ENCODE measurements at regions of chr6 and their contacts with region 1.

Region 1: GRCh38 chr6:52598123-52598823 is 21.4 kb upstream of the TRAM2 start:
- H3K4me3 ChIP-seq: no peak overlapping the region
- H3K27ac ChIP-seq: no peak overlapping the region
- H3K4me1 ChIP-seq: peaks cover 4% of the 10 kb centered on the region; the same call in 1 of the 2 replicates
- CTCF ChIP-seq: peak; percentile 86

Region 2: GRCh38 chr6:52419809-52420670 is 178.2 kb before region 1 on chr6 and contains the start of gene EFHC1:
- CTCF ChIA-PET with region 1: interaction called, 87 read pairs
- POLR2A ChIA-PET with region 1: interaction called, 10 read pairs
- H3K4me3 ChIP-seq: peak within 1 kb of the TSS; percentile 66
- H3K27ac ChIP-seq: peak within 1 kb of the TSS; percentile 56; the same call in 1 of the 2 replicates
- H3K4me1 ChIP-seq: 0 out of 2 replicates have a peak, but pooled peaks cover 3% of the 10 kb centered on the region
- CTCF ChIP-seq: peak; percentile 31; the same call in 1 of the 2 replicates

Region 3: GRCh38 chr6:52503848-52504781 is 94.2 kb before region 1 on chr6:
- CTCF ChIA-PET with region 1: interaction called, 18 read pairs
- POLR2A ChIA-PET with region 1: no interaction called
- H3K4me3 ChIP-seq: no peak overlapping the region; the same call in 1 of the 2 replicates
- H3K27ac ChIP-seq: peak overlapping the region; percentile 65
- H3K4me1 ChIP-seq: peaks cover 8% of the 10 kb centered on the region
- CTCF ChIP-seq: no peak

Region 4: DNA sequence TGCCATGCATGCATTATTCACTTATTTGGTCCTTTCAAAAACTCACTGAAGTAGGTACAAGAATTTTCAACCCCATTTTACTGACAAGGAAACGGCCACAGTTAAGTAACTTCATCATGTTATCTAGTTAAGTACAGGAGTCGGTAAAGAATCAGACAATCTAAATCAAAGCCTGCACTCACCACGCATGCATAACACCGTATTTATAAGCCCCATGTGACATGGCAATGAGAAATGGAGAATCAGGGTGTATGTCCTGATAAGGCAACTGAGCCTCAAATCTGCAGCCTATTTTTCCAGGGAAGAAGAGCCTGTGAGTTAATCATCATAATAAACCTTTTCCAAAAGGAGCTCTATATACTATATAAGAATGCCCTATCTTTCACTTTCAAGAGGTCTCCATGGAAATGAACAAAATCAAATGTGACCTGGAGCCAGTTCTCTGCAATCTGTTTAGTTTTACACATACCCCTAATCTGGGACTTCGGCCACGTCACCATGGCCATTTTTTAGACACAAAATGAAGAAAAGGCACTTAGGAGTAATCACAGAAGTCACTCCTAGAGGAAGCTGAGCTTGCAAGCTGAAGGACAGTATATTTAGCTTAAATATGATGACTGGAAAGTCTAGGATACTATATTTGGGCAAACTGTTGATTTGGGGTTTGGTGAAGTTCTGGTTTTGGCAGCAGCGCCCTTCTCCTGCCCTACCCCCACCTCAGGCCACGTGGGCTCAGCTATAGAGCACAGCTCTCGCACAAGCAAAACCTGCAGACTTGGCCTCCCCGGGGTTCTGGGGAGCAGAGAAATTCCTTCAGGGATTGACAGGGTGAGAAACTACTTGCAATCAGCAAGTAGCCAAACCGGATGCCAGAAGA is 40.6 kb before region 1 on chr6:
- CTCF ChIA-PET with region 1: no interaction called
- POLR2A ChIA-PET with region 1: no interaction called
- H3K4me3 ChIP-seq: no peak overlapping the region
- H3K27ac ChIP-seq: no peak overlapping the region
- H3K4me1 ChIP-seq: no peaks in the 10 kb centered on the region
- CTCF ChIP-seq: no peak

Region 5: DNA sequence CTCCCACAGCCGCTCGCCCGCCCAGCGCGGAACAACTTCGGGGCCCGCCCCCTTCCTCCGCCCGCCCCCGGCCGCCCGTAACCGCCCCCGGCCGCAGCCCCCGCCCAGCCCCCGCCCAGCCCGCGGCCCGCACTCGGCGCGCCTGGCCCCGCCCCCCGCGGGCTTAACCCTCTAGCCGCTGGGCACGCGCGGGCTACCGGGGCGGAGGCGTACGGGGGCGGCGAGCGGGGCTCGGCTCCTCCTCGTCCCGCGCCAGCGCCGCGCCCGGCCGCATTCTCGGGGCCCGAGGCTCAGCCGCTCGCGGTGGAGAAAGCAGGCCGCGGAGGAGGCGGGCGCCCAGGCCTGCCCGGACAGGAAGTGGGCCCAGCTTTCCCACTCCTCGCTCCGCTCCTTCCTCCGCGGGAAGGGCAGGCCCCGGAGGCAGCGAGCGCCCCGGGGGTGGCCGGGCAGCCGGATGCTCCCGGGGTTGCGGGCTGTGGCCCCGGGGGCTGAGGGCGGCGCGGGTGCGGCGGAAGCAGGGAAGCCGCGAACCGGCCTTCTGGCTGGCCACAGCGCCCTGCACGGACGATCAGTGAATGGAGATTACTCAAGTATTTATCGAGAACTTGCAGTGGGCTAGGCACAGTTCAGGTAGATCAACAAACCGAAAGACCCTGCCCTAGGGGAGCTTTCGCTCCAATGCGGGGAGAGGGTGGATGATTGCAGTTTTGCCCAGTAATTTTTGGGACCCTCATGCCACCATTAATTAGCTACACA is 21.1 kb before region 1 on chr6 and contains the start of gene TRAM2:
- CTCF ChIA-PET with region 1: interaction called, 95 read pairs
- POLR2A ChIA-PET with region 1: interaction called, 7 read pairs
- H3K4me3 ChIP-seq: peak within 1 kb of the TSS; percentile 67
- H3K27ac ChIP-seq: peak within 1 kb of the TSS; percentile 97
- H3K4me1 ChIP-seq: peaks cover 9% of the 10 kb centered on the region
- CTCF ChIP-seq: no peak

Region 6: GRCh38 chr6:52635049-52635577 is 36.8 kb after region 1 on chr6:
- CTCF ChIA-PET with region 1: interaction called, 11 read pairs
- POLR2A ChIA-PET with region 1: no interaction called
- H3K4me3 ChIP-seq: no peak overlapping the region
- H3K27ac ChIP-seq: no peak overlapping the region
- H3K4me1 ChIP-seq: no peaks in the 10 kb centered on the region
- CTCF ChIP-seq: no peak

Region 7: GRCh38 chr6:52647199-52647598 is 48.9 kb after region 1 on chr6:
- CTCF ChIA-PET with region 1: interaction called, 15 read pairs
- POLR2A ChIA-PET with region 1: interaction called, 3 read pairs
- H3K4me3 ChIP-seq: no peak overlapping the region
- H3K27ac ChIP-seq: no peak overlapping the region
- H3K4me1 ChIP-seq: no peaks in the 10 kb centered on the region; the same call in 1 of the 2 replicates
- CTCF ChIP-seq: no peak

Region 8: GRCh38 chr6:52664186-52664990 is 66.1 kb after region 1 on chr6:
- CTCF ChIA-PET with region 1: interaction called, 40 read pairs
- POLR2A ChIA-PET with region 1: no interaction called
- H3K4me3 ChIP-seq: peak overlapping the region; percentile 52
- H3K27ac ChIP-seq: peak overlapping the region; percentile 76
- H3K4me1 ChIP-seq: peaks cover 10% of the 10 kb centered on the region; the same call in 1 of the 2 replicates
- CTCF ChIP-seq: 0 out of 2 replicates have a peak, but pooled peaks have one; percentile 39

Region 9: DNA sequence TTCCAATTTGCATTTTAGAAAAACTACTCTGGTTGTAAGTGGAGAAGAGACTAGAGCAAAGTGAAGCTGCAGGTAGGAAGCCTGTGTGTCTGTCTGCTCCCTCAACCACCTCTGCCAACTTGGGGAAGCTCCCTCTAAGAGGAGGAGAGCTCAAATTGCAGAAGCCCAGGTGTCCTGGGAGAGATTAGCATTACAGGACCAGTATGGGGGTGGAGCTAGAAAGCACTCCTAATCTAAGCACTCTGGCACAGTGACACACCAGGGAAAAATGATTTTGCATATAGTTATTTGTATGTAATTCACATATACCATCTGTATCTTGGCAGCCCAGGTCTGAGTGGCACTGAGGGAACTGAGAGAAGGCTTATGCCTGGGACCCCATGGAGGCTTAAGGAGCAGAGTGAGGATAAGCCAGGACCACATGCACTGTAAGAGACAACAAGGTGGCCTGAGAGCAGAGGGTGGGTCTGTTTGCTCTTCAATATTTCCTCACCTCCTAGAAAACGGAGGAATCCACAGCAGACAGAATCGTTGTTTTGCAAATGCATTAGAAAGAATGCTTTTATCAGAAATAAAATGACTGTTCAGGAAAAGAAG is 151.4 kb after region 1 on chr6:
- CTCF ChIA-PET with region 1: no interaction called
- POLR2A ChIA-PET with region 1: no interaction called
- H3K4me3 ChIP-seq: no peak overlapping the region
- H3K27ac ChIP-seq: no peak overlapping the region
- H3K4me1 ChIP-seq: no peaks in the 10 kb centered on the region
- CTCF ChIP-seq: no peak

Region 10: GRCh38 chr6:52946306-52946705 is 348.0 kb after region 1 on chr6:
- CTCF ChIA-PET with region 1: no interaction called
- POLR2A ChIA-PET with region 1: no interaction called
- H3K4me3 ChIP-seq: no peak overlapping the region
- H3K27ac ChIP-seq: no peak overlapping the region
- H3K4me1 ChIP-seq: no peaks in the 10 kb centered on the region
- CTCF ChIP-seq: no peak

Measured in HEK293 (cell line).